ENCODE measurements at regions of chr1 and their contacts with region 1.

Region 1: DNA sequence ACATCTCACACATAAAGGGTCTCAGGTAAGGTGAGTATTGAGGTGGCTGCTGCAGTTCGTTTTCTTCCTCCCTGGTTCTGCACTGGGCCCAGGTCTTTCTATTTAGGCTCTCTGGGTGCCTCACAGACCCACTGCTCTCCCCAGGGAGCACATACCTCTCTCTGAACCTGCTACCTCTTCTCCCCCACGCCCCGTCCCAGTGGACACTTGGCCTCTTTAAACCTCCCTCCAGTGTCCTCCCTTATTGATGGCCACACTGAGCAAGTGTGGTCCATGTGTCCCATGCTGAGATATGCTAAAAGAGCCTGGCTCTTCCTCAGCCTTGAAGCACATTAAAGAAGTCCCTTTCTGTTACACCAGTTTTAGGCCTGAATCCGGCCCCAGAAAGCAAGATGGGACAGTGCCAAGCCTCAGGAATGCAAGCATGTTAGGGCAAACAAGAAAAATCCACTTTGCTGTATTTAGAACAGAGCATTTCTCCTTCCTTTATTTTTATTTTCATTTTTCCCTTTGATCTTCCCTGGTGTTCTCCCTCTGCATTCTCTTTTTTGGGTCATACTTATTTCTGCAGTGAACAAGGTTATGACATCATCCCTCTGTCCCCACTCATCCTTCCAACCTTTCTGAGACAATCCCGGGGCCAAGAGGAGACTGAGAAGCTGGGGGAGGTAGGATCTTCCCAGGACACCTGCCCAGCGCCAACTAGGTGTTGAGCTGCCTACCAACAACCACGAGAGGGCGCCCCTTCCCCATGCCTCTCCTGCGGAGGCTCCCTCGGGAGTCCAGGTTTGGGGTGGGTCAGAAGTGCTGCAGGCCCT is 5.0 kb upstream of the CHI3L2 start:
- DNase-seq: peak; percentile 81
- ATAC-seq: peak; percentile 57
- H3K4me3 ChIP-seq: peak overlapping the region; percentile 23; the same call in 1 of the 2 replicates
- H3K27ac ChIP-seq: peak overlapping the region; percentile 100
- H3K4me1 ChIP-seq: peaks cover 88% of the 10 kb centered on the region
- H3K27me3 ChIP-seq: no peaks in the 10 kb centered on the region
- CTCF ChIP-seq: peak; percentile 96 to 97 (median 96); a peak in 5 of 6 replicates
- EP300 ChIP-seq: no peak
- POLR2A ChIP-seq: no peak
- RAD21 ChIP-seq: peak; percentile 99

Region 2: DNA sequence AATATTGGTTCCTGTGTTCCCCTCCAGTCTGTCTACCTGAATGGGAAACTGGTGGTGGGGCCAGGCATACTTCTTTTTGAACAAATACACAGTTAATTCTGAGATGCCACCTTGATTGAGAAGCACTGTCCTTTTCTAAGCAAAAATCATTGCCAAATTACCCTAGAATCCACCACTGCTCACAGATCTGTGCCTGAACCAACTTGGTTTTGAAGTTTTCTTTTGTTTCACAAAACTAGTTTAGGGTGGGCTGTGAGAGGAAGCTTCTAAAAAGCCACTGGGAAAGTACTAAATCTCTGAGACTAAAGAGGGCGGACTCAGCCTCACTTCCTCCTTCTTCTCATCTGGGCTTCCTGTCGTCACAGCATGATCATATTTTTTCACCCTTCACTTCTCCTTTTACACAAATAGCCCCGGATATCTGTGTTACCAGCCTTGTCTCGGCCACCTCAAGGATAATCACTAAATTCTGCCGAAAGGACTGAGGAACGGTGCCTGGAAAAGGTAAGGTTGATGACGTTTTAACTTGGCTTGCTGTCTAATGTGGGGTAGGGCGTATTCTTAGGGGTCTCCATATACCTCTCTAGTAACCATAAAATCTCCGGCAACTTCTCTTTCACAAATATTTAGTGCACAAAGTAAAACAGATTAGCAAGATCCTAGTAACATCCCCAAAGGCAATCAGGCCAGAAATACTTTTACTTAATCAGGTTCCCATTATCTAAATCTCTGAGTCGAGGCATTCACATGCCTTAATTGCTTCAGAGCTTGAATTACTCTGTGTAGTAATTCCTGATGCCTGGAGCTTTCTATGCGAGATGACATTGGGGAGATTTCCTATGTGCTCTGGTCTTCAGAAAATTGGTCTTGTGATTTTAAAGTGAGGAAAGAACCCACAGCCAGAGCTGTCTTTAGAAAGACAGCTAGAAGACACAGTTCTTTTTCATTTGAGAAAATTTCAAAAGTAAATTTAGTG is 349.5 kb before region 1 on chr1 and contains the start of gene CD53:
- CTCF ChIA-PET with region 1: interaction called, 4 read pairs
- POLR2A ChIA-PET with region 1: interaction called, 4 read pairs
- RAD21 ChIA-PET with region 1: interaction called, 28 read pairs
- SMC1A ChIA-PET with region 1: interaction called, 17 read pairs
- in situ Hi-C with region 1: no loop called
- intact Hi-C with region 1: loop called (anchors 5 kb)
- DNase-seq: peak; percentile 78
- ATAC-seq: peak; percentile 65
- H3K4me3 ChIP-seq: peak within 1 kb of the TSS; percentile 88
- H3K27ac ChIP-seq: peak within 1 kb of the TSS; percentile 98
- H3K4me1 ChIP-seq: peaks cover 6% of the 10 kb centered on the region; the same call in 1 of the 2 replicates
- H3K27me3 ChIP-seq: no peaks in the 10 kb centered on the region
- CTCF ChIP-seq: no peak
- EP300 ChIP-seq: peak in 1 of 2 experiments; percentile 63; a peak in 2 of 4 replicates
- POLR2A ChIP-seq: peak; percentile 69
- RAD21 ChIP-seq: no peak
- polyA plus RNA-seq, gene CD53: 698 to 917 TPM

Region 3: GRCh38 chr1:111127923-111128643 is 94.4 kb before region 1 on chr1:
- CTCF ChIA-PET with region 1: interaction called, 4 read pairs
- POLR2A ChIA-PET with region 1: interaction called, 11 read pairs
- RAD21 ChIA-PET with region 1: interaction called, 17 read pairs
- SMC1A ChIA-PET with region 1: interaction called, 21 read pairs
- in situ Hi-C with region 1: no loop called
- intact Hi-C with region 1: loop called (anchors 1 kb)
- DNase-seq: peak; percentile 81
- ATAC-seq: peak; percentile 90
- H3K4me3 ChIP-seq: 0 out of 2 replicates have a peak overlapping the region, but pooled peaks have one; percentile 45
- H3K27ac ChIP-seq: peak overlapping the region; percentile 94
- H3K4me1 ChIP-seq: peaks cover 43% of the 10 kb centered on the region
- H3K27me3 ChIP-seq: no peaks in the 10 kb centered on the region
- CTCF ChIP-seq: no peak
- EP300 ChIP-seq: peak; percentile 26 to 54; a peak in 1 of 4 replicates
- POLR2A ChIP-seq: no peak
- RAD21 ChIP-seq: no peak

Region 4: GRCh38 chr1:111190651-111191451 is 31.7 kb before region 1 on chr1:
- CTCF ChIA-PET with region 1: interaction called, 239 read pairs
- POLR2A ChIA-PET with region 1: interaction called, 371 read pairs
- RAD21 ChIA-PET with region 1: interaction called, 542 read pairs
- SMC1A ChIA-PET with region 1: interaction called, 284 read pairs
- in situ Hi-C with region 1: no loop called
- intact Hi-C with region 1: loop called (anchors 5 kb)
- DNase-seq: no peak
- ATAC-seq: no peak
- H3K4me3 ChIP-seq: no peak overlapping the region
- H3K27ac ChIP-seq: no peak overlapping the region
- H3K4me1 ChIP-seq: peaks cover 34% of the 10 kb centered on the region
- H3K27me3 ChIP-seq: no peaks in the 10 kb centered on the region
- CTCF ChIP-seq: no peak
- EP300 ChIP-seq: no peak
- POLR2A ChIP-seq: no peak
- RAD21 ChIP-seq: no peak

Region 5: GRCh38 chr1:111399792-111400610 is 177.5 kb after region 1 on chr1:
- CTCF ChIA-PET with region 1: interaction called, 117 read pairs
- POLR2A ChIA-PET with region 1: interaction called, 8 read pairs
- RAD21 ChIA-PET with region 1: interaction called, 37 read pairs
- SMC1A ChIA-PET with region 1: interaction called, 37 read pairs
- in situ Hi-C with region 1: no loop called
- intact Hi-C with region 1: loop called (anchors 1 kb)
- DNase-seq: peak; percentile 15
- ATAC-seq: peak; percentile 44; the same call in 2 of the 3 replicates
- H3K4me3 ChIP-seq: no peak overlapping the region
- H3K27ac ChIP-seq: no peak overlapping the region
- H3K4me1 ChIP-seq: no peaks in the 10 kb centered on the region
- H3K27me3 ChIP-seq: no peaks in the 10 kb centered on the region
- CTCF ChIP-seq: peak; percentile 60 to 64 (median 60)
- EP300 ChIP-seq: no peak
- POLR2A ChIP-seq: no peak
- RAD21 ChIP-seq: peak; percentile 86

Region 6: DNA sequence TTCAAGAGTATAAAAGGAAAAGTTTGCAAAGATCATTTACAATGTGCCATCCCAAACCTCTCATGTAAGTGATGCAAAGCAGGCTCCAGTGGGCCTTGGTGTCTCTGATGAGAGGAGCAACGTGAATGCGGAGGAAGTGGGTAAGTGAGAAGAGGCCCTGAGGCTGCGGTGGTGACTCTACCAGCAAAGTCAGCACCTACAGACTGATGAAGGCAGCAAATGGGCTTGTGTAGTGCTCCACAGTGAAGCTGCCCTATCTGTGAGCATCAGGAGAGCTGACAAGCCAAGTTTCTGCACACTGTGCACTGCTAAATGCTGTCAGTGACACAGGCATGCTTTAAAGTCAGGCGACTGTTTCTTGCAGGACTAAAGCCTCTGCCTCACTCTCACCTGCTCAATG is 381.5 kb after region 1 on chr1:
- CTCF ChIA-PET with region 1: no interaction called
- POLR2A ChIA-PET with region 1: no interaction called
- RAD21 ChIA-PET with region 1: interaction called, 28 read pairs
- SMC1A ChIA-PET with region 1: interaction called, 22 read pairs
- in situ Hi-C with region 1: loop called (anchors 5 kb)
- intact Hi-C with region 1: loop called (anchors 2 kb)
- DNase-seq: no peak
- ATAC-seq: peak; percentile 56
- H3K4me3 ChIP-seq: no peak overlapping the region
- H3K27ac ChIP-seq: peak overlapping the region; percentile 98
- H3K4me1 ChIP-seq: peaks cover 54% of the 10 kb centered on the region
- H3K27me3 ChIP-seq: no peaks in the 10 kb centered on the region
- CTCF ChIP-seq: no peak
- EP300 ChIP-seq: no peak
- POLR2A ChIP-seq: peak; percentile 70
- RAD21 ChIP-seq: no peak